Activated CD4-positive, alpha-beta T cell treated with anti-CD3 and anti-CD28 coated beads for 36 hours (primary cell): ENCODE measurements at regions of chr19 and their contacts with region 1.

Region 1: DNA sequence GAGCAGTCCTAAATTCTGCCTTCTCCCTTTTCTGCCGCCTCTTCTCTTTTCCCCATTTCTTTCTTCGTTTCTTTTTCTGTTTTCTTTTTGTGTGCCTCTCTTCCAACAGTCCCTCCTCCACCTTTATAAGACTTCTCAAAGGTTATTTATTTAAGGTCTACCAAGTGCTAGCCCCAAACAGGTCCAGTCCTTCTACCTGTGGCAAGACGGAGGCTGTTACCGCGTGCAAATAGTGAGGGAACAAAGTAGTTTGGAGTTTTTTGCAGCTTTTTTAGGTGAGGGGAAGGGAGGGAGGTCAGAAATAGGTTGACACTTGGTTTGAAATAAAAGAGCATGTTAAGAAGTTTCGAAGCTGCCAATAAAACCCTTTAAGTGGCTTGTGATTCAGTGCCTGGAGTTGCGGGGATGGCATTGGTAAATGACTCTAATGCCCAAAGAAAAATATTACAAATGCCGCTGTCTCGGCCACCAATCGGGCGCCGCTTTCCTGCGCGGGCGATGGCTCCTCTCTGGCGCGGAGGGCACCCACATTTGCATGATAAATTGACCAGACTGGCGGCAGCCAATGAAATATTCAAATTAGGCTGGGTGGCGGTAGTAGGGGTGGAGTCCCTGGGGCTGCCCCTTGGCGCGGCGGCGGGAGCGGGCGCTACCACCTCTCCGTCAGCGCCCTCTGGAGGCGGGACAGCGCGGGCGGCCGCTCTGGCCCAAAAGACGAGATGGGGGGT is 7.5 kb upstream of the TSHZ3 start:
- DNase-seq: peak; percentile 86
- ATAC-seq: peak; percentile 88
- H3K4me3 Mint-ChIP-seq: peak overlapping the region; percentile 28
- H3K27ac Mint-ChIP-seq: no peak overlapping the region
- H3K4me1 Mint-ChIP-seq: peaks cover 40% of the 10 kb centered on the region
- H3K27me3 Mint-ChIP-seq: peaks cover 68% of the 10 kb centered on the region

Region 2: DNA sequence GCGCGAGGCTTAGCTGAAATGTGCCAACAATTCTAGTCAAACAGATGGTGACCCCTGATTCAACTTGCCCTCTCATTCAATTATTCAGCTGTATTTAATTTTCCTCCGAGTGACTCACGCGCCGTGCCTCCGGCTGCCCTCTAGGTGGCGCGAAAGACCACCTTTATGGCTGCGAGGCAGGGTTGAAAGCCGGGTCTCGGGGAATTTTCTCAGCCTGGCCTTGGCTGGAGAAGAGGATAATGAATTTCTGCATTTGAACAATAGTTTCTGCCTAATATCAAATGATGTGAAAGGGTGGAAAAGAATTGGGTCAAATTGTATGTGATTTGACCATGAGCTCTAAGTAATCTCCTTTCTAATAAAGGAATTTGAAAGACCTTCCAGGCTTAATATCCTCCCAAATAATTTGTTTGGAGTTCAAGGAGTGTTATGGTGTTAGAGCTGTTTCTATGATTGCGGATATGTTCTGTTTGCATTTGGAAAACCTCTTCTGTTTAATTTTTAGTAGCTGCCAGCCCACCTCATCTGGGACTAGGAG is 673.7 kb before region 1 on chr19:
- CTCF ChIA-PET with region 1: no interaction called
- POLR2A ChIA-PET with region 1: no interaction called
- intact Hi-C with region 1: loop called (anchors 2 to 10 kb)
- DNase-seq: peak; percentile 76
- ATAC-seq: no peak
- H3K4me3 Mint-ChIP-seq: no peak overlapping the region
- H3K27ac Mint-ChIP-seq: no peak overlapping the region
- H3K4me1 Mint-ChIP-seq: no peaks in the 10 kb centered on the region
- H3K27me3 Mint-ChIP-seq: peaks cover 28% of the 10 kb centered on the region

Region 3: GRCh38 chr19:30799865-30800755 is 556.6 kb before region 1 on chr19:
- CTCF ChIA-PET with region 1: interaction called, 3 read pairs
- POLR2A ChIA-PET with region 1: no interaction called
- intact Hi-C with region 1: loop called in 1 of 2 experiments (anchors 5 kb)
- DNase-seq: peak; percentile 59
- ATAC-seq: peak; percentile 51
- H3K4me3 Mint-ChIP-seq: no peak overlapping the region
- H3K27ac Mint-ChIP-seq: no peak overlapping the region
- H3K4me1 Mint-ChIP-seq: no peaks in the 10 kb centered on the region
- H3K27me3 Mint-ChIP-seq: peaks cover 15% of the 10 kb centered on the region

Region 4: GRCh38 chr19:31110331-31110730 is 246.4 kb before region 1 on chr19:
- CTCF ChIA-PET with region 1: interaction called, 4 read pairs
- POLR2A ChIA-PET with region 1: no interaction called
- intact Hi-C with region 1: loop called (anchors 1 to 2 kb)
- DNase-seq: peak; percentile 44
- ATAC-seq: peak; percentile 51
- H3K4me3 Mint-ChIP-seq: no peak overlapping the region
- H3K27ac Mint-ChIP-seq: no peak overlapping the region
- H3K4me1 Mint-ChIP-seq: peaks cover 7% of the 10 kb centered on the region
- H3K27me3 Mint-ChIP-seq: peaks cover 21% of the 10 kb centered on the region

Region 5: GRCh38 chr19:31249217-31249616 is 107.5 kb before region 1 on chr19:
- CTCF ChIA-PET with region 1: no interaction called
- POLR2A ChIA-PET with region 1: no interaction called
- intact Hi-C with region 1: no loop called
- DNase-seq: no peak
- ATAC-seq: no peak
- H3K4me3 Mint-ChIP-seq: no peak overlapping the region
- H3K27ac Mint-ChIP-seq: no peak overlapping the region
- H3K4me1 Mint-ChIP-seq: no peaks in the 10 kb centered on the region
- H3K27me3 Mint-ChIP-seq: peaks cover 7% of the 10 kb centered on the region

Region 6: DNA sequence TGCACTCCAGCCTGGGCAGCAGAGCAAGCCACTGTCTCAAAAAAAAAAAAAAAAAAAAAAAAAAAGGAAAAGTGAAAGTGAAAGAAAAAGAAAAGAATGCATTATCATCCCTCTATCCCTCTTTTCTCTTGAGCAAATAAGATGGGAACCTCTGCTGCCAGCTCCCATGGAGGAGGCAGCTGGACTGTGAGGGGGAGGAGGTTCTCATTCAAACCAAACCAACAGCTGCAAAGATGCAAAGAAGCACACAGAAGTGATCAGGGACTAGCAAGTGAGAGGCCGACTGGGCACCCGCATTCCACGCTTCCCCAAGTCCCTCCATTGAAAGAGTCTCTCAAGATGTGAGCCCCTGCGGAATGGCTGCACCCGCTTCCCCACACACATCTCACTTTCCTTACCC is 71.0 kb before region 1 on chr19:
- CTCF ChIA-PET with region 1: no interaction called
- POLR2A ChIA-PET with region 1: no interaction called
- intact Hi-C with region 1: no loop called
- DNase-seq: no peak
- ATAC-seq: no peak
- H3K4me3 Mint-ChIP-seq: no peak overlapping the region
- H3K27ac Mint-ChIP-seq: no peak overlapping the region
- H3K4me1 Mint-ChIP-seq: peaks cover 3% of the 10 kb centered on the region
- H3K27me3 Mint-ChIP-seq: no peaks in the 10 kb centered on the region

Region 7: DNA sequence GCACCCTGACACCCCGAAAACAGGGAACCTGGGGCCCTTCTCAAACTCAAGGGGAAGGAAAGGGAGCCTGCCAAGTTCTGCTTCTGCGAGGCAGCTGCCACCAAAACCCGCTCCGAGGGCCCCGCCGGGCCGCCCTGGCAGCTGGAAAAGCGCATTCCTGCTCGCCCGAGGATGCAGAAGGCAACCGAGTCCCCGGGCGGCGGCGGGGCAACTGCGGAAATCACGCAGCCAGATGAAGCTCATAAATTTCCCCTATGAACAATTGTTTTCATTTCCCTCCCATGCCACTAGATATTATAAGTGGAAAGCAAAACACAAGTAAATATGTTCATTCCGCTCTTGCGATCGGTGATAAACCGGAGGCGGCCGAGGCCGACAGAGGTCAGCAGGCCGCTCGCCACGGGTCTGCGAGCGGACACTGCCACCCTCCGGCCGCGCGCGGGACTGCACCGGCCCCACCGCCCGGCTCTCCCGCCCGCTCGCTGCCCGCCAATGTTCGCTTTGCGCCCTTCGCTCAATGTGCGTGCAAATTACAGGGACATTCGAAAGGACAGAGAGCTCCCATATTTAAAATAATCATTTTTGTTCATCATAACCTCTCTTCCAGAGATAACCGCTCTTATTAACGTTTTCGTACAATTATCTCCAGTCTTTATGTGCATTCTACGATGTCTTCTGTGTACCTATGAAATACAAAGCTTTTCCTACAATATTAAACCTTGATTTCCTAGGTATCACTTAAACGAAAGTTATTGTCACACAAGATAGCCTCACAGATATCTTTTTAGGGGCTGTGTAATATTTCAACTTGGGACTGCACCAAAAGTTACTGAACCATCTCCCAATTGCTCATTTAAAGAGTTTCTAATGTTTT is 867.9 kb after region 1 on chr19:
- CTCF ChIA-PET with region 1: no interaction called
- POLR2A ChIA-PET with region 1: no interaction called
- intact Hi-C with region 1: loop called in 1 of 2 experiments (anchors 5 kb)
- DNase-seq: peak; percentile 80
- ATAC-seq: peak; percentile 75
- H3K4me3 Mint-ChIP-seq: peak overlapping the region; percentile 51
- H3K27ac Mint-ChIP-seq: no peak overlapping the region
- H3K4me1 Mint-ChIP-seq: peaks cover 13% of the 10 kb centered on the region
- H3K27me3 Mint-ChIP-seq: peaks cover 28% of the 10 kb centered on the region